ENCODE measurements at regions of chr3 and their contacts with region 1.

Region 1: DNA sequence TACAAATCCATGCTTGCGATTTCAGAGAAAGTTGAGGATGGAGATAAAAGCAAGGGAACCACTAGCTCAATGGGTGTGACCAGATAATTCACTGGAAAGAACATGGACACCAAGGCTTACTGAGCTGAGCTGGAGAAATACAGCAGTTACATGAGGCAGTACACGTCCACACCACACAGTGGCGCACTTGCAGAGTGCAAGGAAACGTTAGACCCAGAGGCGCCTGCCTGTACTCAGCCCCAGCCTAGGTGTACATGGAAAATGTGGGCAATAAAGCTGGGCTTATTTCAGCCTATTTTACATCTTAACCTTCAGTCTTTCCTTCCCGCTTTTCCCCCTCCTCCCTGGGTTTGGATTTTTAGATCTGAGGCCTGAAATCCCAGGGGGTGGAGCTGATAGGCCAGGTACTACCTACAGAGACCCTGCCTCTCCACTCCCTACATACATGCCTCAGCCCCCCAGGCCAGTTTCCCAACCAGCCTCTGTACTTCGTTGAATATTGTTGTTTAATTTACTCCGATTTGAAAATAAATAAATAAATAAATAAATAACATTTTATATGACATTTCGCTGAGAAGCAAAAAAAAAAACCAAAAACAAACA is 60.1 kb downstream of the PCOLCE2 start:
- DNase-seq: peak; percentile 82
- H3K4me3 Mint-ChIP-seq: no peak overlapping the region
- H3K27ac Mint-ChIP-seq: no peak overlapping the region
- H3K4me1 Mint-ChIP-seq: no peaks in the 10 kb centered on the region
- H3K27me3 Mint-ChIP-seq: no peaks in the 10 kb centered on the region
- CTCF ChIP-seq: peak; percentile 84

Region 2: GRCh38 chr3:142586803-142587406 is 241.9 kb before region 1 on chr3:
- CTCF ChIA-PET with region 1: interaction called, 92 read pairs
- POLR2A ChIA-PET with region 1: interaction called, 8 read pairs
- intact Hi-C with region 1: loop called (anchors 1 kb)
- DNase-seq: peak; percentile 89
- H3K4me3 Mint-ChIP-seq: no peak overlapping the region
- H3K27ac Mint-ChIP-seq: no peak overlapping the region
- H3K4me1 Mint-ChIP-seq: peaks cover 6% of the 10 kb centered on the region
- H3K27me3 Mint-ChIP-seq: peaks cover 21% of the 10 kb centered on the region
- CTCF ChIP-seq: peak; percentile 55

Region 3: DNA sequence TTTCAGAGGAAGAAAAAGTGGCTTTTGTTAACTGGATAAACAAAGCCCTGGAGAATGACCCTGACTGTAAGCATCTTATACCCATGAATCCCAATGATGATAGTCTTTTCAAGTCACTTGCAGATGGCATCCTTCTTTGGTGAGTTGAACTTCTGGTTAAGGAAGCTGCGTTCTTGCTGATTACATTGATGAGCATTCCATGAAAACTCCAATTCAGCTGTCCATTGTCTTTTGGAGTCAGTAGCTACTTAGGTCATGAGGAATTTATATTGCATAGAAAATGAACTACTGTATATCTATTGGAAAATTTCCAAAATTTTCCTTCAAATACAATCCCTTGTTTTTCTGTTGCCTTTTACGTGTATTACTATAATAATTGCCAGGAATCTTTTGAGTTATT is 152.7 kb before region 1 on chr3:
- CTCF ChIA-PET with region 1: no interaction called
- POLR2A ChIA-PET with region 1: no interaction called
- intact Hi-C with region 1: no loop called
- DNase-seq: no peak
- H3K4me3 Mint-ChIP-seq: no peak overlapping the region
- H3K27ac Mint-ChIP-seq: no peak overlapping the region
- H3K4me1 Mint-ChIP-seq: no peaks in the 10 kb centered on the region
- H3K27me3 Mint-ChIP-seq: no peaks in the 10 kb centered on the region
- CTCF ChIP-seq: no peak

Region 4: GRCh38 chr3:142817897-142818296 is 10.9 kb before region 1 on chr3:
- CTCF ChIA-PET with region 1: interaction called, 37 read pairs
- POLR2A ChIA-PET with region 1: no interaction called
- intact Hi-C with region 1: no loop called
- DNase-seq: no peak
- H3K4me3 Mint-ChIP-seq: no peak overlapping the region
- H3K27ac Mint-ChIP-seq: no peak overlapping the region
- H3K4me1 Mint-ChIP-seq: no peaks in the 10 kb centered on the region
- H3K27me3 Mint-ChIP-seq: no peaks in the 10 kb centered on the region
- CTCF ChIP-seq: no peak

Region 5: DNA sequence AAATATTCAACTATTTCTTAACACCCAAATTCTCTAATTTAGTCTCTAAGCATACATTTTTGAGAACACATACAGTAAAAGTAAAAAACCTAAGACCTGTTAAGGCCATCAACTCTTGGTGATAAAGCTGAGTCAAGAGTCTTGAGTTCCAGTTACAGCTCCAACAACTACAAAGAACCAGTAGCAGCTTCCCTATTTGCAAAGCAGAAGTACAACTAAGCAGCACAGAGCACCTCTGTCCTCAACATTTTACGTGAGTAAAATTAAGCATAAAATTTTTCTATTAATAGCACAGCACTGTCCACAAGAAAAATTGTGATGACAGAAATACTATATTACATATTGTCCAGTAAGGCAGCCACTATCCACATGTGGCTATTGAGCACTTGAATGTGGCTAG is 55.7 kb after region 1 on chr3:
- CTCF ChIA-PET with region 1: interaction called, 10 read pairs
- POLR2A ChIA-PET with region 1: no interaction called
- intact Hi-C with region 1: no loop called
- DNase-seq: no peak
- H3K4me3 Mint-ChIP-seq: no peak overlapping the region
- H3K27ac Mint-ChIP-seq: no peak overlapping the region
- H3K4me1 Mint-ChIP-seq: no peaks in the 10 kb centered on the region
- H3K27me3 Mint-ChIP-seq: no peaks in the 10 kb centered on the region
- CTCF ChIP-seq: no peak

Region 6: DNA sequence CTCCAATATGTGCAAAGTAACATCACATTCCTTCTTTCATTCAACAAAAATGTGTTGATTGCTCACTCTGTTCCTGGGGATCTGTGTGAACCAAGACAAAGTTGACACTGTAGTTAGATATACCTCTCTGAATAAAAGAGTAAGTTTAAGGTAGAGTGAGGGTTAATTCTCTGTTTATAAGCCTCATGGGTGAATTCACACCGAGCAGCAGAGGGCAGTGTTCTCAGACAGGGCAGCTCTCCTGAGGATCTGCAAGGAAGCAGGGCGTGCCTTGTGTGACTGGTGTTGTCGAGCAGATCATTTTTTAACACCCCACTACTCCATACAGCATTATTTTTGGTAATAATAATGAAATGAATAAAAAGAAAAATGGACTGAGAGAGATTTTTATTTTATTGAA is 100.3 kb after region 1 on chr3:
- CTCF ChIA-PET with region 1: interaction called, 38 read pairs
- POLR2A ChIA-PET with region 1: no interaction called
- intact Hi-C with region 1: loop called (anchors 1 kb)
- DNase-seq: peak; percentile 70
- H3K4me3 Mint-ChIP-seq: no peak overlapping the region
- H3K27ac Mint-ChIP-seq: no peak overlapping the region
- H3K4me1 Mint-ChIP-seq: peaks cover 15% of the 10 kb centered on the region
- H3K27me3 Mint-ChIP-seq: no peaks in the 10 kb centered on the region
- CTCF ChIP-seq: peak; percentile 53

Region 7: DNA sequence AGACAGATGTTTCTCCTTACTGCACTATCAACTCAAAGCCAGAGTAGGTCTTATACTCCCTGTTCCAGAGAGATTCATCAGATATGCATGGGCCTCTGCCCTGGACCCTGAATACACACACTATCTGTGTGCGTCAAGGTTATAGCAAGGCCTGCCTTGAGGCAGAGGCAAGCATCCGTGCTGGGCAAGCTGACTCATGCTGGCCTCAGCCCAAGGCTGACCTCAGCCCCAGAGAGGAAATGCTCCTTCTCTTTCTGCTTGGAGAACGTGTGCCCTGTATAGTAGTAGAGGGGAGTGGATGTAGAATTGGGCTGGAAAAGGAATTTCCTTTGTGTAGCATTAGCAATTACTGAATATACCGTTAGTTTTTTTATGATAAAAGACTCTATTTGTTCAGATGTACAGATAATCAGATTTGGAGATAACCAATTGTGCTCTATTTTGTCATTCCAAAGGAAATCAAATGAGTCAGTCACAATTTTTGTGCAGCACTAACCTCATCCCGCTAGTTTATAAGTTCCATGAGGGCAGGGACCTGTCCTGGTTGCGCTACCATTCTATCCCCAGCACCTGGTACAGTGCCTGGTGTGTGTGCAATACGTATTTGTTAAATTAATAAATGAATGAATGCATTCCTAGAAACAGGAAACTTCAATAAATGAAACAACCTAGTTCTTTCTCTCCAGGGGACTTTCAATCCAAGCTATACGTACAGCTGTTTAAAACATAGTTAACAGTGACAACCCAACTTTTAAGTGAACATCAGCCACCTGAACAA is 148.0 kb after region 1 on chr3:
- CTCF ChIA-PET with region 1: interaction called, 115 read pairs
- POLR2A ChIA-PET with region 1: interaction called, 4 read pairs
- intact Hi-C with region 1: no loop called
- DNase-seq: peak; percentile 92
- H3K4me3 Mint-ChIP-seq: no peak overlapping the region
- H3K27ac Mint-ChIP-seq: peak overlapping the region; percentile 9
- H3K4me1 Mint-ChIP-seq: peaks cover 5% of the 10 kb centered on the region
- H3K27me3 Mint-ChIP-seq: no peaks in the 10 kb centered on the region
- CTCF ChIP-seq: no peak

Region 8: DNA sequence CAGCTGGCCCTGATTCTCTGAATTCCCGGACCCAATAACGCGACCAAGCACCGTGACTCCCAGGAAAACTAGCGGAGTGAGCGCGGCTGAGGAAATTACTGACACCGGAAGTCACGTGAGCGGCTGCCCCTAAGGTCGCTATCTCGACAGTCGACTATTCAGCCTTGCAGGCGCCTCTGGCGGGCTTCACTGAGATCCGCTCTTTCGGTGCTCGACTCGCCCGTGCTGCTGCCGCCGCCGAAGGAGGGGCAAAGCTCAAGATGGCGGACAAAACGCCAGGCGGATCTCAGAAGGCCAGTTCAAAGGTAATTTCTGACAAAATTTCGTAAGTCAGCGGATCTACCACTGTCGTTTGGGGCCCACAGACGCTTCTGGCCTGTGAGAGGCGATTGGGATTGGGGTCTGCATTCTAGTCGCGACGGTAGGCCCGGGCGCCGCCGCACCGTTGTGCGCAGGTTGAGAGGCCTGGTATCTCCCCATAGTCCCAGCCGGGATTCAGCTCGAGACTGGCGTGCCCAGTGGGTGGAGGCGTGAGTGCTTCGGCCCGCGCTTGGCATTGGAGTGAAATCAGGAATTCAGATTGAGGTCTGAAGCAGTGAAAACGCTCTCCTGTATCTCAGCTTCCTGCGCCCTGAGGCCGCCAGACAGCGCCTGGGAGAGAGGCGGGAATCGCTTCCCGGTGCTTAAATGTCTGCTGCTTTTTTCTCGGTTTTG is 172.7 kb after region 1 on chr3 and contains the start of gene U2SURP:
- CTCF ChIA-PET with region 1: interaction called, 212 read pairs
- POLR2A ChIA-PET with region 1: interaction called, 14 read pairs
- intact Hi-C with region 1: no loop called
- DNase-seq: peak; percentile 98
- H3K4me3 Mint-ChIP-seq: peak within 1 kb of the TSS; percentile 94
- H3K27ac Mint-ChIP-seq: peak within 1 kb of the TSS; percentile 99
- H3K4me1 Mint-ChIP-seq: peaks cover 25% of the 10 kb centered on the region
- H3K27me3 Mint-ChIP-seq: no peaks in the 10 kb centered on the region
- CTCF ChIP-seq: no peak
- total RNA-seq, gene U2SURP: 131 and 146 TPM in 2 replicates

Region 9: GRCh38 chr3:143135150-143135549 is 306.3 kb after region 1 on chr3:
- CTCF ChIA-PET with region 1: no interaction called
- POLR2A ChIA-PET with region 1: no interaction called
- intact Hi-C with region 1: no loop called
- DNase-seq: peak; percentile 95
- H3K4me3 Mint-ChIP-seq: no peak overlapping the region
- H3K27ac Mint-ChIP-seq: no peak overlapping the region
- H3K4me1 Mint-ChIP-seq: peaks cover 13% of the 10 kb centered on the region
- H3K27me3 Mint-ChIP-seq: no peaks in the 10 kb centered on the region
- CTCF ChIP-seq: no peak

Region 10: DNA sequence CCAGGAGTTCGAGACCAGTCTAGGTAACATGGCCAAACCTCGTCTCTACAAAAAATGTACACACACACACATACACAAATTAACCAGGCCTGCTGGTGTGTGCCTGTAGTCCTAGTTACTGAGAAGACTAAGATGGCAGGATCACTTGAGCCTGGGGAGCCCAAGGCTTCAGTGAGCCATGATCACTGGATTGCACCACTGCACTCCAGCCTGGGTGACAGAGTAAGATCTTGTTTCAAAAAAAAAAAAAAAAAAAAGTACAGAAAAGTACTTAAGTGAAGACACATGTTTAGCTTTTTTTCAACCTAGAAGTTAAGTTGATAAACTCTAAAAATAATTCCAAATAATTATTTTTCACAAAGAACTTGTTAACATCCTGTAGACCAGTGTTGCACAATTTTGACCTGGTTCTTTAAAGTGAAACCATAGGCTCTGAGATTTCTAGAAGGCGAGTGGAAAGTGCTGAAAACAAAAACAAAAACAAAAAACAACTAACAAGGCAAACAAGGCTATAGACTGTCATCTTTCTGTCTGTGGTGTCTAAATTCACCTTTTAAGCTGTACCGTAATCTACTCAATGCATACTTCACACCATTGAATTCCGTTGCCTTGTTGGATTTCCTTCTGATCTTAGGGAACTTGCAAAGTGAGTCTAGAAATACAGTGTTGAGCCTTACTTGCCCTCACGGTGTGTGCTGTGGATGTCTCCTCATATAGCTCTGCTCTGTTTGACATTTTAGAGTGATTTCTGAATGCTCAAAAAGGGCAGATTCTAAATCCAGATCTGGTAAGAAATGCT is 354.3 kb after region 1 on chr3:
- CTCF ChIA-PET with region 1: no interaction called
- POLR2A ChIA-PET with region 1: no interaction called
- intact Hi-C with region 1: no loop called
- DNase-seq: no peak
- H3K4me3 Mint-ChIP-seq: no peak overlapping the region
- H3K27ac Mint-ChIP-seq: no peak overlapping the region
- H3K4me1 Mint-ChIP-seq: no peaks in the 10 kb centered on the region
- H3K27me3 Mint-ChIP-seq: no peaks in the 10 kb centered on the region
- CTCF ChIP-seq: no peak

Region 11: DNA sequence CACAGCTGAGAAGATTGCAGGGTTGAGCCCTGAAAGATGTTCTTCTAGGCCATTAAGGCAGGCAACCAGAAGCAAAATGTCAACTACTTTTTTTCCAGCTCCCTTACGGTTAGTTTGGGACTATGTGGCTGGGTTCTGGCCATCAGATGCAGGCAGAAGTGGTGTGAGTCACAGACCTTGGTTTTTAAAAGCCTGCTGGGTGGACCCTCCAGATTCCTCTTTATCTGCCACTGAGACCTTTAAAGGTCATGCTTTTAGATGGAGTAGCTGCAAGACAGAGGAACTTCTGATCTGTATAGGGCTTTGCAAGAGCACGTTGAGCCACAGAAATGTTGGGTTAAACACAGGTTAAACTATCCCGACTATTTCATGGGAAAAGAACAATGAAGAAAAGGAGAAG is 393.7 kb after region 1 on chr3:
- CTCF ChIA-PET with region 1: no interaction called
- POLR2A ChIA-PET with region 1: no interaction called
- intact Hi-C with region 1: no loop called
- DNase-seq: no peak
- H3K4me3 Mint-ChIP-seq: no peak overlapping the region
- H3K27ac Mint-ChIP-seq: no peak overlapping the region
- H3K4me1 Mint-ChIP-seq: no peaks in the 10 kb centered on the region
- H3K27me3 Mint-ChIP-seq: no peaks in the 10 kb centered on the region
- CTCF ChIP-seq: no peak

Measured in MCF 10A (cell line).